ENCODE measurements at regions of chr14 and their contacts with region 1.

Region 1: DNA sequence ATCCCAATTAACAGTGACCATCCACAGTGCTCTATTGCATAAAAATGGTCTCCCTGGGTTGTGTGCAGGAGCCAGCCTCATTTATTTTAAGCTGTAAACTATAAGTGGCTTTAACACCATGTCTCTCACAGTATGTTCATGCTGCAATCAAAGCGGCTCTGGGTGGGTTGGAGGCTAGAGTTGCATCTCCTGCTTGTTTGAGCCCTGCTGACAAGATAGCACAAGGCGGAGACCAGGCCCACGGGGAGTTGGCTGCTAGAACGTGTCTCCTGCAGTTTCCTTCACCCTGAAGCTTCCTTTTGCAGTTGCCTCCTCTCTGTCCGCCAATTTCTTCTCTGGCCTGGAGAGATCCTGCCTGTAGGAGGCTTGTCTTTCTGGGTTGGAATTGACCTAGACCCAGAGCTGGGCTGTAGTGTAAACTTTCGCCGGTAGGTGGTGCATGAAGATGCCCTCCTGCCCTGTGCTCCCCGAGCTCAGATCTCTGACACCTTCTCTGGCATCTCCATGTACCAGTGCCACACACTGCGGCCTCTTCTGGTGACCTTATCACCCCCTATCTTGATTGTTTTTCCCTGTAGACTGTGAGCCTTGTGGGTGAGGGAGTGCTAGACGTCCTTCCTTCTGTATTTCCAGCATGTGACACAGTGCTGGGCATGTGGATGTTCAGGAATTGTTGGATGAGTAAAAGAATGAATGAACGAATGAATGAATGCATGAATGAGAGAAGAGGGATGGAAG is 10.3 kb downstream of the OTUB2 start:
- DNase-seq: peak; percentile 80
- H3K4me3 ChIP-seq: no peak overlapping the region
- H3K27ac ChIP-seq: no peak overlapping the region
- H3K4me1 ChIP-seq: peaks cover 0 to 14% of the 10 kb centered on the region in 2 experiments; a peak in 1 of 4 replicates
- H3K27me3 ChIP-seq: no peaks in the 10 kb centered on the region
- CTCF ChIP-seq: peak; percentile 78
- EP300 ChIP-seq: no peak
- RAD21 ChIP-seq: peak; percentile 74

Region 2: GRCh38 chr14:93346929-93347721 is 689.4 kb before region 1 on chr14 and contains the start of gene COX8C:
- CTCF ChIA-PET with region 1: no interaction called
- POLR2A ChIA-PET with region 1: no interaction called
- DNase-seq: no peak
- H3K4me3 ChIP-seq: no peak within 1 kb of the TSS
- H3K27ac ChIP-seq: no peak within 1 kb of the TSS
- H3K4me1 ChIP-seq: no peaks in the 10 kb centered on the region
- H3K27me3 ChIP-seq: no peaks in the 10 kb centered on the region
- CTCF ChIP-seq: no peak
- EP300 ChIP-seq: no peak
- RAD21 ChIP-seq: no peak
- polyA plus RNA-seq, gene COX8C: not detected in 2 replicates

Region 3: DNA sequence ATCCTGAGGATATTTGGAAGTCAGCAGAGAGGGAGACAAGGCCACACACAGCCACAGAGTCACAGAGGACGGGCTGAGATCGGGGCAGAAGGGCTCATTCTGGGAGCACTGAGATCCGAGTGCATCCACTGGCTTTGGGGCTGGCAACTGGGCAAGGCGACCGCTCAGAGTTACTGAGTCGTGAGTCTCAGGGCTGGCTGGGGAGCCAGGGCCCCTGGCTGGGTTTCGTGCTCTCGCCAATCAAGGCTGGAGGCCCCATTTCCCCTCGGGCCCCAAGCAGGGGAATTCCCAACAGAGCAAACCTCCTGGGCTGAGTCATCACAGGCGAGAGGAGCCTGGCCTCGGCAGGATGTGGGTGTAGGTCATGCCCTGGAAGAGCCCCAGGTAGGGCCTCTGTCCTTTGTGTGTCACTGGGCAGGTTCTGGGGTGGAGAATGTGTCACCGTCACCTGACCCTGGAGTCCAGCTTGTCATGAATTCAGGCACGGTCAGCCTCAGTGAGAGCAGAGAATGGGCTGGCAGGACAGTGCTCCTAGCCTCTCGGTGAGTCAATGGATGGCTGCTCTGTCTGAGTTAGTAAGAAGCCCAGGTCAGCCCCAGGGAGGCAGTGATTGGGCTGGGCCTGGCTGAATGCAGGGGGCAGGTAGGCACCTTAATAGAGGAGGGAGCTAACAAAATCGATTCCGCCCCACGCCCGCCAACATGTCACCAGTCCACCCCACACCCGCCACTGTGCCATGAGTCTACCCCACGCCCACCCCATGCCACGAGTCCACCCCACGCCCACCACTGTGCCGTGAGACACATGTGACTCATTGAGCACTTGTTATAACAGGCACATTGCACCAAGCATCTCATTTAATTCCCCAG is 77.0 kb before region 1 on chr14:
- CTCF ChIA-PET with region 1: no interaction called
- POLR2A ChIA-PET with region 1: no interaction called
- DNase-seq: no peak
- H3K4me3 ChIP-seq: no peak overlapping the region
- H3K27ac ChIP-seq: peak overlapping the region in 1 of 2 experiments; percentile 88; a peak in 2 of 4 replicates
- H3K4me1 ChIP-seq: peaks cover 3 to 16% of the 10 kb centered on the region in 2 experiments; a peak in 2 of 4 replicates
- H3K27me3 ChIP-seq: no peaks in the 10 kb centered on the region
- CTCF ChIP-seq: no peak
- EP300 ChIP-seq: peak in 1 of 2 experiments; percentile 88; a peak in 1 of 4 replicates
- RAD21 ChIP-seq: no peak

Region 4: GRCh38 chr14:94051115-94051514 is 14.6 kb after region 1 on chr14:
- CTCF ChIA-PET with region 1: interaction called, 74 read pairs
- POLR2A ChIA-PET with region 1: interaction called, 3 read pairs
- DNase-seq: no peak
- H3K4me3 ChIP-seq: no peak overlapping the region
- H3K27ac ChIP-seq: no peak overlapping the region
- H3K4me1 ChIP-seq: peaks cover 0 to 18% of the 10 kb centered on the region in 2 experiments; a peak in 2 of 4 replicates
- H3K27me3 ChIP-seq: no peaks in the 10 kb centered on the region
- CTCF ChIP-seq: peak; percentile 49
- EP300 ChIP-seq: no peak
- RAD21 ChIP-seq: peak; percentile 44

Region 5: DNA sequence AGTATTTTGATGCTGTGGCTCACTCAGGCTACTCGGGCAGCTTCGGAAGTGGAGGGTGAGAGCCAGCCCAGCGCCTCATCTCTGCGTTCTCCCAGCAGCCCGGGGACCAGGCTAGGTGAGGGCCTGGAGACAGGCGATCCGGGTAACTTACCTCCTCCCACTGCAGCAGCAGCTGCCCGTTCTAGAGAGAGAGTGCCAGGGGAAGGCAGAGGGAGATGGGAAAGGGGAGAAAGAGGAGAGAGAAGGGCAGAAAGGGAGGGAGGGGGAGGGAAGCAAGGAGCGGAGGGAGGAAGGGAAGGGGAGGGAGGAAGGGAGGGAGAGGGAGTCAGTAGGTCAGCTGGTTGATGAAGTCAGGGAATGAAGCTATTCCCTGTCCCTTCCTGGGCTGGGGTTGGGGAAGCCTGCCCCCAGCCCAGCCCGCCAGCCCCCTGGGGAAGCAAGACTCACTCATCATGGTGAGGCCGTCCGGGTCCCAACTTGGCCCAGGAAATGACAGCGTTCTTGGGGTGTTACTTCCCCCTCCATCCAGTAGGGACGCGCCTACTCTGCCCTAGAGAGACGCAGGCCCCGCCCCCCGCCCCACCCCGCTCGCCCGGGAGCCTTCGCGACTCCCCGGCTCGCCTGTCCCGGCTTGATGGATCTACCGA is 92.8 kb after region 1 on chr14 and contains the start of gene IFI27L2:
- CTCF ChIA-PET with region 1: interaction called, 64 read pairs
- POLR2A ChIA-PET with region 1: no interaction called
- DNase-seq: peak; percentile 88
- H3K4me3 ChIP-seq: peak within 1 kb of the TSS; percentile 62 to 67
- H3K27ac ChIP-seq: peak within 1 kb of the TSS; percentile 46 to 56
- H3K4me1 ChIP-seq: peaks cover 0 to 7% of the 10 kb centered on the region in 2 experiments; a peak in 2 of 4 replicates
- H3K27me3 ChIP-seq: no peaks in the 10 kb centered on the region
- CTCF ChIP-seq: peak; percentile 12; the same call in 1 of the 2 replicates
- EP300 ChIP-seq: no peak
- RAD21 ChIP-seq: no peak
- polyA plus RNA-seq, gene IFI27L2: 200 and 208 TPM in 2 replicates

Region 6: DNA sequence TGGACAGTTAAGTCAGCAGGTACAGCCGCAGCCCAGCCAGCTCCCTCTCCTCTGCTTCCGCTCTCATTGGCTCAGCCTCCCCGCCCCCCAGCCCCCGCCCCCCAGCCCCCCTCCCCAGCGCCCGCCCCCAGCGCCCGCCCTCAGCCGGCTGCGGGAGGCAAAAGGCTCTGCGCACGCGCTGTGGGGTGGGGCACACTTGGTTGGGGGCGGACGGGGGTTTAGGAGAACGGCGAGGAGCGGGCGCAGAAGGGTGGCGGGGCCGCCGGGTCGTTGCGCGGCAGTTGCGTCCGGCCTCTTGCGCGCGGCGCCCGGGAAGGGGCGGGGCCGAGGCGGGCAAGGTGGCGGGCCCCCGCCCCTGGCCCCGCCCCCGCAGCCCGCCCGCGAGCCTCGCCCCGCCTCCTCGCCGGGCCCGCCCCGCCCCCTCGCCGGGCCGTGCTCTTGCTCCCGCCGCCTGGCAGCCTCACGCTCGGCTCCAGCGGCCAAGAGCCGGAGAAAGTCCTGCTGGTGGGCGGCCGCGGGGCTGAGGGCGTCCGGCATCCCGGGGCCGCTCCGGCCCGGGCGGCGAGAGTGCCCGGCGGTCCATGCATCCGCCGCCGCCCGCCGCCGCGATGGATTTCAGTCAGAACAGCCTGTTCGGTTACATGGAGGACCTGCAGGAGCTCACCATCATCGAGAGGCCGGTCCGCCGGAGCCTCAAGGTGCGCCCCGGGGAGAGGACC is 137.6 kb after region 1 on chr14 and contains the start of gene PPP4R4:
- CTCF ChIA-PET with region 1: interaction called, 24 read pairs
- POLR2A ChIA-PET with region 1: no interaction called
- DNase-seq: peak; percentile 97
- H3K4me3 ChIP-seq: peak within 1 kb of the TSS; percentile 75 to 81
- H3K27ac ChIP-seq: peak within 1 kb of the TSS; percentile 2 to 75; a peak in 3 of 4 replicates
- H3K4me1 ChIP-seq: peaks cover 9 to 11% of the 10 kb centered on the region in 2 experiments; a peak in 2 of 4 replicates
- H3K27me3 ChIP-seq: no peaks in the 10 kb centered on the region
- CTCF ChIP-seq: no peak
- EP300 ChIP-seq: no peak
- RAD21 ChIP-seq: no peak
- polyA plus RNA-seq, gene PPP4R4: 2.5 and 3.5 TPM in 2 replicates

Region 7: DNA sequence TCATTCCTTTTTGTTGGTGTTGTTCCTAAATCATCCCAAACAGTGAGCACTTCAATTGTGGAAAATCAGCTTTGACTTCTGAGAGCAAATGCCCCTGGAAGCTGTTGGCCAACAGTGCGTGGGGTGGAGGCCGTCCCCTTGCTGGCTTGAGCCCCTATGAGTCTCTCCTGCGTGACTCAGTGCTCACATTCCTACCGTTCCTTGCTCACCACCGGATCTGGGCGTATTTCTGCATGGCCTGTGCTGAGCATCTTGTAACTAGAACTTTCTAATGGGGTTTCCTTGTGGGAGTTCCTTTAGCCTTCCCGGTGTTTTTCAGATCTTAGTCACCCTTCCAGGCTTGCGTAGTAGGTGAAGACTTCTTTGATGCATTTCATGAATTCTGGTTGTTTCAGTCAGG is 337.2 kb after region 1 on chr14:
- CTCF ChIA-PET with region 1: no interaction called
- POLR2A ChIA-PET with region 1: no interaction called
- DNase-seq: no peak
- H3K4me3 ChIP-seq: no peak overlapping the region
- H3K27ac ChIP-seq: peak overlapping the region in 1 of 2 experiments; percentile 59; a peak in 2 of 4 replicates
- H3K4me1 ChIP-seq: peaks cover 0 to 5% of the 10 kb centered on the region in 2 experiments; a peak in 1 of 4 replicates
- H3K27me3 ChIP-seq: no peaks in the 10 kb centered on the region
- CTCF ChIP-seq: no peak
- EP300 ChIP-seq: peak in 1 of 2 experiments; percentile 52; a peak in 1 of 4 replicates
- RAD21 ChIP-seq: no peak